ENCODE measurements at regions of chr9 and their contacts with region 1.

Region 1: DNA sequence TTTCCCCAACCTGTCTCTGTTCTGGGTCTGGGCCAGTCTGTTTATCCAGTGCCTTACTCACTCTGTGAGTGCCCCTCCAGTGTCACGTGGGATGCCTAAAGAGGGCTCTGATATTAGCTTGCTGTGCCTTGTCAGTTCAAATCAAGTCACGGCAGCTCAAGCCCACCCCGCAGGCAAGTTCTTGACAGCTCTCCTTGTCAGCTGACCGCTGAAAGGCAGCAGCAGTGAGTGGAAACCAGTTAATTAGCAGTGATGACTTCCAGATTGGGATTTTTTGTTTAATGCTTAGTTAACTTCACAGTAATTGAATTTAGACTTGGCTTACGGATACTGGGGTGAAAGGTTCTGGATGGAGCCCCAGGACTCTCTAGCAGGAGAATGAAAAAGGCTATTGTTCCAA is 210.1 kb downstream of the PSAT1 start:
- DNase-seq: no peak
- H3K4me3 ChIP-seq: no peak overlapping the region
- H3K27ac ChIP-seq: no peak overlapping the region
- H3K4me1 ChIP-seq: no peaks in the 10 kb centered on the region
- H3K27me3 ChIP-seq: peaks cover 3% of the 10 kb centered on the region; the same call in 1 of the 2 replicates

Region 2: GRCh38 chr9:78406933-78407332 is 100.1 kb before region 1 on chr9:
- in situ Hi-C with region 1: loop called (anchors 25 kb)
- DNase-seq: no peak
- H3K4me3 ChIP-seq: no peak overlapping the region
- H3K27ac ChIP-seq: no peak overlapping the region
- H3K4me1 ChIP-seq: no peaks in the 10 kb centered on the region
- H3K27me3 ChIP-seq: peaks cover 21% of the 10 kb centered on the region

Region 3: DNA sequence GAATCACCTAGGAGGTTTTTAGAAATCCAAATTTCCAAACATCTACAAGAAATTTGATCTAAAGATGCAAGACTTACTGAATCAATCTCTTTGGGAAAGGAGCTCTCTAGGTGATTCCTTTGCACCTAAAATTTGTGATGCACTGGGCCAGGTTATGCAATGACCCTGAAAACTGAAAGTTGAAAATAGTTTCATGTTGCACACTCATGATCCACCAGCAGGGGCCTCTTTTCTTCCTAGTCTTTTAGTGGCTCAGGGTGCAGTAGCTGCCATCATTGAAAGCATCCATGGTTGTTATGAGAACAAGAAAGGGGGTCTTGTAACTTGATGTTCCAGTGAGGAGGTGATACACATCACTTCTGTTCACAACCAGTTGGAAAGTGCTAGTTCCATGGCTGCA is 276.7 kb after region 1 on chr9:
- in situ Hi-C with region 1: no loop called
- DNase-seq: peak; percentile 27
- H3K4me3 ChIP-seq: no peak overlapping the region
- H3K27ac ChIP-seq: no peak overlapping the region
- H3K4me1 ChIP-seq: peaks cover 28% of the 10 kb centered on the region
- H3K27me3 ChIP-seq: no peaks in the 10 kb centered on the region